Heart right ventricle (tissue), 16 donors: ENCODE measurements at regions of chr15 and their contacts with region 1.

Region 1: DNA sequence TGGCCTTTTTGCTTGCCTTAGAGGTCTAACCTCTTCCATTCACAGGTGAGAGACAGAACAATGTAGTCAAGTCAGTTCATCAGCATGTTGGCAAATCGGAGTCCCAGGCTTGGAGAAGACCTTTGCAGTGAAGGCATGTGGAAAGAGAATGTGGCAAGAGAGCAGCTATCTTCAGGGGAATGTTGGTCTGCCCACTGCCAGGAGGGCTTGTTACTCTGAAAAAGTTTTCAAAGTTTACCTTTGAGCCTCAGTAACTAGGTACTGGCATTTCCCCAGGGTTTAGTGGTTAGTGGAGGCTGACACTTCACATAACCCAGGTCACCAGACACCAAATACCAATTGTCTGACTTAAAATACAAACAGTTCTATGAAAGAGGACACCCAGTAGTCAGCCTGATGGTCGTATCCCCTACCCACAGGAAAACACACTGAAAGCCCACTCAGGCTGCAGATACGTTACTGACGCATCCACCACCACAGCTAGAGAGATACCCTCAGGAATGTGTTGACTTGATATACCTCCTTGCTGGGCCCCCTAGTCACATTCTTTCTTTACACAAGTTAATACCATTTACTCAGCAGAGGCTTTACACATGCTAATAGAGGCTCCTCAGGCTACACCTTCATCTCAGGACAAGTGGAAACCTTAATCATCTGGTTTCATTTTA is 9.7 kb upstream of the ARID3B start:
- DNase-seq: no peak
- ATAC-seq: no peak
- H3K4me3 ChIP-seq: no peak overlapping the region
- H3K27ac ChIP-seq: no peak overlapping the region
- H3K4me1 ChIP-seq: peaks cover 0 to 4% (median 0%) of the 10 kb centered on the region in 9 donors
- H3K27me3 ChIP-seq: no peaks in the 10 kb centered on the region
- CTCF ChIP-seq: no peak

Region 2: GRCh38 chr15:74460871-74461846 is 70.1 kb before region 1 on chr15 and contains the start of gene UBL7:
- intact Hi-C with region 1: loop called in 1 of 10 experiments (anchors 10 kb)
- DNase-seq: peak; percentile 95 to 98
- ATAC-seq: peak; percentile 99 to 100 (median 99)
- H3K4me3 ChIP-seq: peak within 1 kb of the TSS; percentile 48 to 95 (median 72)
- H3K27ac ChIP-seq: peak within 1 kb of the TSS; percentile 54 to 92 (median 86)
- H3K4me1 ChIP-seq: peaks cover 0 to 25% (median 18%) of the 10 kb centered on the region in 9 donors
- H3K27me3 ChIP-seq: no peaks in the 10 kb centered on the region
- CTCF ChIP-seq: peak in 5 of 9 donors; percentile 14 to 48 (median 45)
- total RNA-seq, gene UBL7: 49.1 to 56.6 (median 52.7) TPM

Region 3: DNA sequence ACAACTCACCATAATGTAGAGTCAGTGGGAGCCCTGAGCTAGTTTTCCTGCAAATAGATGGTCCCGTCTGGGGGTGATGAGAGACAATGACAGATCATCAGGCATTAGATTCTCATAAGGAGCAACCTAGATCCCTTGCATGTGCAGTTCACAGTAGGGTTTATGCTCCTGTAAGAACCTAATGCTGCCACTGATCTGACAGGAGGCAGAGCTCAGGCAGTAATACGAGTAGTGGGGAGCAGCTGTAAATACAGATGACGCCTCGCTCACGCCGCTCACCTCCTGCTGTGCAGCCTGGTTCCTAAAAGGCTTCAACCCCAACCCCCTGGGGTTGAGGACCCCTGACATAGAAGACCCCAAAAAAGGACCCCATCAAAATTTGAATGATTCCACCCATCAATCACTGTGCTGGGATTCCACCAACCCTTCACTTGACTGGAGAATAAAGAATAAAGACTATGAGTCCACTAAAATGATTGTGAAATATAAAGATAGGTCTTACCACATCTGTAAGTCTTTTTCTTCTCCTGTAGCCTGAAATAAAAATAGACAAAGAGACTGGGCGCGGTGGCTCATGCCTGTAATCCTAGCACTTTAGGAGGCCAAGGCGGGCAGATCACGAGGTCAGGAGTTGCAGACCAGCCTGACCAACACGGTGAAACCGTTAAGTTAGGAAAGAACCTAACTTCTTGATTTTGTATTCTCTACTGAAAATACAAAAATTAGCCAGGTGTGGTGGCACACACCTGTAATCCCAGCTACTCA is 60.5 kb before region 1 on chr15:
- intact Hi-C with region 1: loop called in 2 of 10 experiments (anchors 10 kb)
- DNase-seq: no peak
- ATAC-seq: no peak
- H3K4me3 ChIP-seq: no peak overlapping the region
- H3K27ac ChIP-seq: no peak overlapping the region
- H3K4me1 ChIP-seq: no peaks in the 10 kb centered on the region
- H3K27me3 ChIP-seq: no peaks in the 10 kb centered on the region
- CTCF ChIP-seq: no peak

Region 4: GRCh38 chr15:74482661-74483060 is 48.6 kb before region 1 on chr15:
- intact Hi-C with region 1: loop called in 2 of 10 experiments (anchors 5 to 10 kb)
- DNase-seq: no peak
- ATAC-seq: no peak
- H3K4me3 ChIP-seq: no peak overlapping the region
- H3K27ac ChIP-seq: no peak overlapping the region
- H3K4me1 ChIP-seq: no peaks in the 10 kb centered on the region
- H3K27me3 ChIP-seq: no peaks in the 10 kb centered on the region
- CTCF ChIP-seq: peak in 2 of 9 donors; percentile 7 to 15